Left lung (tissue), 14 donors: ENCODE measurements at regions of chr13 and their contacts with region 1.

Region 1: GRCh38 chr13:30465585-30466357 is at the start of gene HMGB1:
- DNase-seq: peak; percentile 96 to 99 (median 98)
- ATAC-seq: peak; percentile 96
- H3K4me3 ChIP-seq: peak within 1 kb of the TSS; percentile 66 to 71
- H3K27ac ChIP-seq: peak within 1 kb of the TSS; percentile 99
- H3K4me1 ChIP-seq: peaks cover 14 to 38% of the 10 kb centered on the region in 2 donors
- H3K27me3 ChIP-seq: no peaks in the 10 kb centered on the region
- CTCF ChIP-seq: no peak
- polyA plus RNA-seq, gene HMGB1: 759 to 976 (median 828) TPM

Region 2: GRCh38 chr13:30617315-30618185 is 151.8 kb after region 1 on chr13 and contains the start of gene USPL1:
- intact Hi-C with region 1: loop called in 1 of 2 experiments (anchors 5 kb)
- DNase-seq: peak; percentile 99 to 100 (median 99)
- ATAC-seq: peak; percentile 93
- H3K4me3 ChIP-seq: peak within 1 kb of the TSS; percentile 78 to 87
- H3K27ac ChIP-seq: peak within 1 kb of the TSS; percentile 99 to 100
- H3K4me1 ChIP-seq: peaks cover 11 to 58% of the 10 kb centered on the region in 2 donors
- H3K27me3 ChIP-seq: no peaks in the 10 kb centered on the region
- CTCF ChIP-seq: peak; percentile 18 to 72
- polyA plus RNA-seq, gene USPL1: 26.2 to 30.7 (median 28.6) TPM